ENCODE measurements at regions of chr12 and their contacts with region 1.

Region 1: DNA sequence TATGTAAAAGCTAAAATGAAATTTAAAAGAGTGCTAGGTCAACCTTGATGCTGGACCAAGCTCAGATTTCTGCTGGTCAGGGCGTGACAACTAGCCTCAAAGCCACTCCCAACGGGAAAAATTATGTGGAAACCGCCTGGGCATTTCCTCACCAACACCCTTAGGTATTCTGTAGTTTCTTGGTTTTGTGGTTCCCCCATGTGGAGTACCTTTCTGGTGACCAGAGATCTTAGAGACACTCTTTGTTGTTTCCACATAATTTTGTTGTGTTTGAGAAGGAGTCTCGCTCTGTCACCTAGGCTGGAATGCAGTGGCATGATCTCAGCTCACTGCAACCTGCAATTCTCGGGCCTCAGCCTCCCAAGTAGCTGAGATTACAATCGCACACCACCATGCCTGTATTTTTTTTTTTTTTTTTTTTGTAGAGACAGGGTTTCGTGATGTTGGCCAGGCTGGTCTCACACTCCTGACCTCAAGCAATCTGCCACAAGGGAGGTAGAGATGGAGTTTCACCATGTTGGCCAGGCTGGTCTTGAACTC is 119.8 kb downstream of the DENND5B start:
- DNase-seq: peak in 1 of 2 experiments; percentile 5
- H3K4me3 ChIP-seq: no peak overlapping the region
- H3K27ac ChIP-seq: no peak overlapping the region
- H3K4me1 ChIP-seq: no peaks in the 10 kb centered on the region
- H3K27me3 ChIP-seq: no peaks in the 10 kb centered on the region
- CTCF ChIP-seq: no peak

Region 2: DNA sequence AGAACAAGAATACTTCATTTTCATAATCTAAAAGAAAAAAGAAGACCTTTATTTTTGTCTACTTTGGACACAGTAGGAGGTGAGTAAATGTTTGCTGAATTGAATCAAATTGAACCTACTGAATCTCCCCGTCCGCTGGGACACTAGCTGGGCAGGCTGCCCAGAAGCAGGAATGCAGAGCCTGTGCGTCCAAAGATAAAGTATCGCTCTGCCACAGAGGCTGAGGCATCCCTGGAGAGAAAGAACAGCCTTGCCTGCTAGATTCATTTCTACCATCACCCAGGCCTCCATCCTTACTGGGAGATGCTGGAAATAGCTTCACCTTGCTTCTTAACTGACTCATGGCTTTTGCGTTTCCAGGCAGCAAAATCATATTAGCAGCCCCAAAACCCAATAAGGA is 608.6 kb before region 1 on chr12:
- CTCF ChIA-PET with region 1: no interaction called
- POLR2A ChIA-PET with region 1: no interaction called
- intact Hi-C with region 1: no loop called
- DNase-seq: no peak
- H3K4me3 ChIP-seq: no peak overlapping the region
- H3K27ac ChIP-seq: no peak overlapping the region
- H3K4me1 ChIP-seq: no peaks in the 10 kb centered on the region
- H3K27me3 ChIP-seq: 0 out of 2 replicates have a peak, but pooled peaks cover 6% of the 10 kb centered on the region
- CTCF ChIP-seq: no peak

Region 3: GRCh38 chr12:31238764-31239387 is 232.3 kb before region 1 on chr12:
- CTCF ChIA-PET with region 1: no interaction called
- POLR2A ChIA-PET with region 1: no interaction called
- intact Hi-C with region 1: no loop called
- DNase-seq: peak in 1 of 2 experiments; percentile 71
- H3K4me3 ChIP-seq: peak overlapping the region; percentile 26; the same call in 1 of the 2 replicates
- H3K27ac ChIP-seq: no peak overlapping the region
- H3K4me1 ChIP-seq: no peaks in the 10 kb centered on the region
- H3K27me3 ChIP-seq: no peaks in the 10 kb centered on the region
- CTCF ChIP-seq: peak; percentile 83

Region 4: GRCh38 chr12:31456562-31456961 is 14.6 kb before region 1 on chr12:
- CTCF ChIA-PET with region 1: no interaction called
- POLR2A ChIA-PET with region 1: no interaction called
- intact Hi-C with region 1: no loop called
- DNase-seq: no peak
- H3K4me3 ChIP-seq: no peak overlapping the region
- H3K27ac ChIP-seq: no peak overlapping the region
- H3K4me1 ChIP-seq: no peaks in the 10 kb centered on the region
- H3K27me3 ChIP-seq: no peaks in the 10 kb centered on the region
- CTCF ChIP-seq: no peak

Region 5: DNA sequence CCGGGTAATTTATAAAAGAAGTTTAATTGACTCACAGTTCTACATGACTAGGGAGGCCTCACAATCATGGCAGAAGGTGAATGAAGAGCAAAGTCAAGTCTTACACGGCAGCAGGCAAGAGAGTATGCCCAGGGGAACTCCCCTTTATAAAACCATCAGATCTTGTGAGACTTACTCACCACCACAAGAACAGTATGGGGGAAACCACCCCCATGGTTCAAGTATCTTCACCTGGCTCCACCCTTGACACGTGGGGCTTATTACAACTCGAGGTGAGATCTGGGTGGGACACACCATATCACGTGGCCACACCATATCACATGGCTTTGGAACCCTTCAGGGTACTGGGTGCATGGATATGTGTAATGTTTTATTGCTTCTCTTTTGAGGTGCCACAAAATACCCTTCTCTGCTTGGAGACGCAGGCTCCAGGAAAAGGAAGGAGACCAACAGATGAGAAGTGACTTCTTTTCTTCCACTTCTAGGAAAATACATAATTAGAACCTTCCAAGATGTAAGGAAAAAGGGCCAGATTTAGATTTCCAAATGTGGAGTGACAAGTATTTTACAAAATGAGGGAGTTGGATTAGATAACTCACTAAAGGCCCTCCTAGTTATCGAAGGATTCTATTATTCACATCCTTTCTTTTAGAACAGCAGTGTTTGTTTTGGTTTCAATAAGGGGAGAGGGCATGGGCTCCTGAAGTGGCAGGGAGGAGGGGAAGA is 155.3 kb after region 1 on chr12:
- CTCF ChIA-PET with region 1: no interaction called
- POLR2A ChIA-PET with region 1: interaction called, 32 read pairs
- intact Hi-C with region 1: no loop called
- DNase-seq: no peak
- H3K4me3 ChIP-seq: no peak overlapping the region
- H3K27ac ChIP-seq: no peak overlapping the region
- H3K4me1 ChIP-seq: no peaks in the 10 kb centered on the region
- H3K27me3 ChIP-seq: no peaks in the 10 kb centered on the region
- CTCF ChIP-seq: no peak